ENCODE measurements at regions of chr2 and their contacts with region 1.

Region 1: GRCh38 chr2:121171625-121172119 is 113.3 kb downstream of the TFCP2L1 start:
- DNase-seq: no peak
- H3K4me3 ChIP-seq: no peak overlapping the region
- H3K27ac ChIP-seq: peak overlapping the region; percentile 96
- H3K4me1 ChIP-seq: peaks cover 44% of the 10 kb centered on the region
- H3K27me3 ChIP-seq: no peaks in the 10 kb centered on the region
- CTCF ChIP-seq: no peak

Region 2: DNA sequence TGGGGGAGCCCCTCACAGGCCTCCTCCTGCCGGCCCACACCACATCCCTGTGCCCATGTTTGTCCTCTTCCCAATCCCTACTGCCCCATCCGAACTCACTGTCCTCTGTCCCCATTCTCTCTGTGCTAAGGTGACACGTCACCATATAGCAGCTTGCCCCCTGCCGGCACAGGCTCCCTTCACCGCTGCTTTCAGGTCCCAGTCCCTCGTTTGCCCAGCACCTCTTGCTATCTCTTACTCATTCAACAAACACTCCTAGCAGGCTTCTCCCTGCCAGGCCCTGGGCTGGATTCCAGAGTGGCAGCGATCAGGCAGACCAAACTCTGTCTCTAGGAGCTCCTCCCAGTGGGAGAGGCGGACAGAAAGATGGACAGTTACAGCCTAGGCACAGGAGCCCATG is 39.0 kb after region 1 on chr2:
- CTCF ChIA-PET with region 1: no interaction called
- dilution Hi-C with region 1: no loop called
- in situ Hi-C with region 1: no loop called
- intact Hi-C with region 1: loop called (anchors 5 kb)
- DNase-seq: no peak
- H3K4me3 ChIP-seq: no peak overlapping the region
- H3K27ac ChIP-seq: no peak overlapping the region
- H3K4me1 ChIP-seq: peaks cover 24% of the 10 kb centered on the region
- H3K27me3 ChIP-seq: no peaks in the 10 kb centered on the region
- CTCF ChIP-seq: no peak

Region 3: DNA sequence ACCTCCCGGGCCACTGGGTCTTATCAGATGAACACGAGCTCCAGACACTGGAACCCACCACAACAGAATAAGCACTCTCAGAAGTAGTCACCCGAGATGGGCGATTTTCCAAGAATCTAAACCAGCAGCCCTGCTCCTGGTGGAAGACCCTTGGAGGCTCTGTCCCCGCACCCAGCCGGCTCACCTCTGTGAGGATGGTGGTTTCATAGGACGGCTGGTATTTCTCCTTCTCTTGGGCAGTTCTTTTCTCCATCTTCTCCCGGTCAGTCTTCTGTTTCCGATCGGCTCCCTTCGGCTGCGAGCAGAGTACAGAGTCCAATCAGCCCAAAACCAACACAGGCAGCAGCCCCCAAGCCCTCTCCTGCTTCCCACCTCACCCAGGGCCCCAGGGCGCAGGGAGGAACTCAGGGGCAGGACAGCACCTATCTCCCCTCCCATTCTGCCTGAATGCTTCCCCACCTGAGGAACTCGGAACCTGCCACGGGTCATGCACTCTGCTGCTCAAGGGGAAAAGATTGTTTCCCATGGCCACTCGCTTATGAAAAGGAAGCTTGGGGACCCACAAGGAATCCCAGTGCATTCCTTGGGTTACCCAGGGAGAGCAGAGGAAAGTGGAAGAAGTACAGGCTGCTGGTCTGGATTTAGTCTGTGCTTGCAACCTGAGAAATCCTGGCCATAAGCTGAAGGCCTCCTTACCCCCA is 70.7 kb after region 1 on chr2:
- CTCF ChIA-PET with region 1: no interaction called
- dilution Hi-C with region 1: loop called (anchors 5 kb)
- in situ Hi-C with region 1: no loop called
- intact Hi-C with region 1: no loop called
- DNase-seq: no peak
- H3K4me3 ChIP-seq: no peak overlapping the region
- H3K27ac ChIP-seq: no peak overlapping the region
- H3K4me1 ChIP-seq: peaks cover 4% of the 10 kb centered on the region
- H3K27me3 ChIP-seq: no peaks in the 10 kb centered on the region
- CTCF ChIP-seq: no peak

Measured in mammary epithelial cell (primary cell).